A549 (cell line): ENCODE measurements at regions of chr11 and their contacts with region 1.

Region 1: DNA sequence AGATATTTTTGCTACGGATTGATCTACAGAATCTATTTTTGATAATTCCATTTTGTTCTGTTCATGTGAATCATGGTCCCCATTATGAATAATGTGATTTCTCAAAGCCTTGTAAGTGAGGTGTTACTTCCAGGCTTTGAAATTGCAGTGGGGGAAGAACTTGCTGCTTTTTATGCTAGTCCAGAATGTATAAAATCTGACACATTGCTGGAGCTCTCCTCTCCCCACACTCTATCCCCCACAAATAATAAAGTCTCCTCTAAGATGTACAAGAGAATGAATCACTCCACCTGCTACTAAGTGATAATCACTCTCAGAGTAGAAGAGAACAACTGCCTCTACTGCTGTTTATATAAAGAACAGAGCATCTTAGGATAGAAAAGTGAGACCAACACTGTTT is 5.9 kb upstream of the RAB6A start:
- DNase-seq: no peak
- ATAC-seq: no peak
- H3K4me3 ChIP-seq: no peak overlapping the region
- H3K27ac ChIP-seq: no peak overlapping the region
- H3K4me1 ChIP-seq: peaks cover 6% of the 10 kb centered on the region; the same call in 1 of the 3 replicates
- CTCF ChIP-seq: no peak
- EP300 ChIP-seq: no peak
- POLR2A ChIP-seq: no peak
- RAD21 ChIP-seq: no peak

Region 2: DNA sequence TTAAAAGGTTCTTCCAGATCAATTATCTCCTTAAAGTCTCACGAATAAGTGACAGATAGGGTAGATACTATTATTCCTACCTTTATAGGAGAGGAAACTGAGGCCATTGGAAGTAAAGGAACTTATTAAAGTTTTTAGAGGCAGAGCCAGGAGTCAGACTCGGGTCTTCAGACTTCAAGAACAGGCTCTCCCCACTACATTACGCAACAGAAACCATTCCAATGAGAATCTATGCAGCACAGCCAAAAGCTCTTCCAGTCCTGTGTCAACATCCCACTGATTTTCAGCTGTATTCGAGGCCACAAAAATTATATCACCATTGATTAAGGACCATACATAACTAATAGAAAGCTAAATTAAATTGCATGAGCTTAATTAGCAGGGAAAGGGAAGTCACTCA is 313.2 kb before region 1 on chr11:
- CTCF ChIA-PET with region 1: no interaction called
- POLR2A ChIA-PET with region 1: no interaction called
- DNase-seq: no peak
- ATAC-seq: no peak
- H3K4me3 ChIP-seq: no peak overlapping the region
- H3K27ac ChIP-seq: no peak overlapping the region
- H3K4me1 ChIP-seq: no peaks in the 10 kb centered on the region
- CTCF ChIP-seq: no peak
- EP300 ChIP-seq: no peak
- POLR2A ChIP-seq: no peak
- RAD21 ChIP-seq: no peak

Region 3: DNA sequence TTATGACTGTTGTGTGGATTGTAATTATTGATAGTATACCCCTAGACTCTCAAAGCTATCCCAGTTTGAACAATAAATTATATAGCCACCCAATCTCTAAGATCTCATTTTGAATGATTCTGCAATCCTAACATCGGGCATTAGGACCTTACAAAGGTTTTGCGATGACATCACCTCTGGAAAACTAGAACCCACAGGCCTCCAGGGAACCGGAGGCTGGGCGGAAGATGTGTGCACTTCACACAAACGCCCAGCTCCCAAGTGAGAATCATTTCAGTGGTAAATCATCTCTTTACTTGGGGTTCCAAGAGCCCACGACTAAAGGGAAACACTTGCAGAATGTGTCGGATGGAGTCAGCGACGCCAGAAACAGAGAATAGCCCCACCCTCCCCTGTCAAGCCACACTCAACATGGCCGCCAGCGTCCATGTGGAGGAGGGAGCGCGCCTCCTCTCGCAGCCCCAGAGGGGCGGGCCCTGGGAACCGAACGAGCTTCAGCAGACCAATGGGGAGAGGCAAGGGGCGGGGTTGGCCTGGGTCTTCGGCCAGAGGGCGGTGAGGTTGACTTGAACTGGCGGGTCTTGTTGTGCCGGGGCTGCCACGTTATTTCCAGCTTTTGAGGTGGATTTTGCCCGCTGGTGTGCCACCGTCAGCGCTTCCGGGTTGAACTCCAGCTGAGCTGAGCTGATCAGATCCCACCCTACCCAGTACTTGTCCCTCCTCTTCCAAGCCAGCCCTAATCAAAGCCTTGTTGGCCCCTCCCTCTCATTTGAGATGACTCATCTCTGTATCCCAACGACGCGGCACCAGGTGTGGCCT is 12.5 kb after region 1 on chr11:
- CTCF ChIA-PET with region 1: interaction called, 19 read pairs
- POLR2A ChIA-PET with region 1: interaction called, 89 read pairs
- DNase-seq: peak; percentile 97 to 99
- ATAC-seq: peak; percentile 99
- H3K4me3 ChIP-seq: peak overlapping the region; percentile 40
- H3K27ac ChIP-seq: peak overlapping the region; percentile 80 to 91
- H3K4me1 ChIP-seq: peaks cover 15% of the 10 kb centered on the region; the same call in 2 of the 3 replicates
- CTCF ChIP-seq: no peak
- EP300 ChIP-seq: no peak
- POLR2A ChIP-seq: peak; percentile 48
- RAD21 ChIP-seq: no peak

Region 4: GRCh38 chr11:73838443-73839122 is 71.8 kb after region 1 on chr11:
- CTCF ChIA-PET with region 1: no interaction called
- POLR2A ChIA-PET with region 1: no interaction called
- DNase-seq: no peak
- ATAC-seq: peak in 1 of 2 experiments; percentile 35; a peak in 2 of 6 replicates
- H3K4me3 ChIP-seq: no peak overlapping the region
- H3K27ac ChIP-seq: no peak overlapping the region
- H3K4me1 ChIP-seq: peaks cover 13% of the 10 kb centered on the region
- CTCF ChIP-seq: no peak
- EP300 ChIP-seq: no peak
- POLR2A ChIP-seq: no peak
- RAD21 ChIP-seq: no peak

Region 5: DNA sequence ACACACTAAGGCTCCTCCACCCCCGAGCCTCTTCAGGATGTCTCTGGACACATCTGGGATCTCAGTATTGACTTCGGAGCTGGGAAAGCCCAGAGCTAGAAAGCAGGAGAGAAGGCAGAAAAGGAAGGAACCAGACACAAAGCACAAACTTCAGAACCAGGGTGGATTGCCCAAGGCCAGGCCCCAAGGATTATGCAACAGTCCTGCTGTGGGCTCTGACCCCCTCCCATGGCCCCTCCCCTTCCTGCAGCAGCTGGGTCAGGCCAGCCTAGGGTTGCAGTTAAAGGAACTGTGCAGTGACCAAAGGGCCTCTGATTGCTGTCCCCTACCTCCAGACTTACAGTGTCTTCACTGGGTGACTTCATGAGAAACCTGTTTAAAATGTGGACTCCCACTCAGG is 695.2 kb after region 1 on chr11:
- CTCF ChIA-PET with region 1: no interaction called
- POLR2A ChIA-PET with region 1: no interaction called
- DNase-seq: no peak
- ATAC-seq: no peak
- H3K4me3 ChIP-seq: no peak overlapping the region
- H3K27ac ChIP-seq: peak overlapping the region in 1 of 2 experiments; percentile 29; a peak in 3 of 6 replicates
- H3K4me1 ChIP-seq: peaks cover 32% of the 10 kb centered on the region
- CTCF ChIP-seq: no peak
- EP300 ChIP-seq: no peak
- POLR2A ChIP-seq: no peak
- RAD21 ChIP-seq: no peak